Naive thymus-derived CD4-positive, alpha-beta T cell (primary cell): ENCODE measurements at regions of chr11 and their contacts with region 1.

Region 1: DNA sequence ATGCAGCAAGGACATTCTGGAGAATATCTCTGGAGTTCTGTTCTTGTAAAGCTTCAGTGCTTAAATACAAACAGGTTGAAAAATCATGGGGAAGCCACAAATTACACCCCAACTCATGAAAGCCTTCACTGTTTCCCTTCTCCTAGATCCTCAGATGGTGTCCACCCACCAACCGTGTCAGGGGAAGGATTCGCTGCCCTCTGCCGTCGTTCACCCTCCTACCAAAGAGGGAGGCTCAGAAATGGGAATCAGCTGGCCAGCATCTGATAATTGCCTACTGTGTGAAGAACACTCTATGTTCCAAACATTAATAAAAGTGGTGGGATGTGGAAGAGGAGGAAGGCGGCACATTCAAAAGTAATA is 7.4 kb upstream of the HEPACAM start:
- DNase-seq: no peak
- ATAC-seq: no peak
- H3K4me3 ChIP-seq: no peak overlapping the region
- H3K4me3 Mint-ChIP-seq: peak overlapping the region in 3 of 10 donors; percentile 3 to 59 (median 40)
- H3K27ac ChIP-seq: no peak overlapping the region
- H3K27ac Mint-ChIP-seq: peak overlapping the region in 7 of 9 donors; percentile 3 to 95 (median 59)
- H3K4me1 ChIP-seq: peaks cover 6 to 20% of the 10 kb centered on the region in 2 donors
- H3K4me1 Mint-ChIP-seq: peaks cover 4 to 36% (median 30%) of the 10 kb centered on the region in 7 donors
- H3K27me3 ChIP-seq: no peaks in the 10 kb centered on the region
- H3K27me3 Mint-ChIP-seq: no peaks in the 10 kb centered on the region

Region 2: DNA sequence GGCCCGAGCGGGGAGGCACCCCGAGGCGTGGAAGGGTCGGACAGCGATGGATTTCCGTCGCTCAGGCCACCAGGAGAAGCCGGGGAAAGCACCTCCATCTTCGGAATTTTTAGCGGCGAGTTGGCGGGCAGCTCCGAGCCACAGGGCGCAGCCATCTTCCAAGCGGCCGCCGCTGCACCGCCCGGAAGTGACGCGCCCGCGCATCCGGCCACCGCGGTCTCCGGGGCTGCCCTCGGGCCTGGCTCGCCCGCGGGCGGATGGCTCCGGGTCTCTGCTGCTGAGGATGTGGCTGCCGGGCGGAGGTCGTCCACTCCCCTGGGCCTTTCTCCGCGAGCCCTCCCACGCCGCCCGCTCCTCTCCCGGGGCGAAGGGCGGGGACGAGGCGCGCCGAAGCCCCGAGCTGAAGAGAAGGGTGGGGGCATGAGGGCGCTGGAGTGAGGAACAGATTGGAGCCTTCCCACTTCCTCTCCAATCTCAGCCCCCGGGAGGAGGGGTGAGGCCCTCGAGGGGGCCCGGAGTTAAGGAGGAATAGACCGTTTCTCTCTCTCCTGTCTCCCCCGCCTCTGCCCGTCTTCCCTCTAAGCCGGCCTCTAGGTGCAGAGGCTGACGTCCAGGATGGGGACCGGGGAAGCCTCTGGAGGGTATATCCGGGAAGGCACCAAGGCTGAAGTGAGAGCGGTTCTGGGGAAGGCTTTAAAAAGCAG is 142.9 kb before region 1 on chr11 and contains the start of gene MSANTD2:
- CTCF ChIA-PET with region 1: no interaction called
- POLR2A ChIA-PET with region 1: no interaction called
- intact Hi-C with region 1: no loop called
- DNase-seq: peak; percentile 65 to 89 (median 73)
- ATAC-seq: peak; percentile 92
- H3K4me3 ChIP-seq: peak within 1 kb of the TSS; percentile 71
- H3K4me3 Mint-ChIP-seq: peak within 1 kb of the TSS; percentile 88 to 97 (median 96)
- H3K27ac ChIP-seq: peak within 1 kb of the TSS; percentile 93
- H3K27ac Mint-ChIP-seq: peak within 1 kb of the TSS; percentile 88 to 98 (median 94)
- H3K4me1 ChIP-seq: peaks cover 8 to 14% of the 10 kb centered on the region in 2 donors
- H3K4me1 Mint-ChIP-seq: peaks cover 13 to 38% (median 32%) of the 10 kb centered on the region in 7 donors
- H3K27me3 ChIP-seq: no peaks in the 10 kb centered on the region
- H3K27me3 Mint-ChIP-seq: peaks cover 0 to 24% (median 0%) of the 10 kb centered on the region in 5 donors
- total RNA-seq, gene MSANTD2: 9.1 to 29.5 (median 14.4) TPM

Region 3: DNA sequence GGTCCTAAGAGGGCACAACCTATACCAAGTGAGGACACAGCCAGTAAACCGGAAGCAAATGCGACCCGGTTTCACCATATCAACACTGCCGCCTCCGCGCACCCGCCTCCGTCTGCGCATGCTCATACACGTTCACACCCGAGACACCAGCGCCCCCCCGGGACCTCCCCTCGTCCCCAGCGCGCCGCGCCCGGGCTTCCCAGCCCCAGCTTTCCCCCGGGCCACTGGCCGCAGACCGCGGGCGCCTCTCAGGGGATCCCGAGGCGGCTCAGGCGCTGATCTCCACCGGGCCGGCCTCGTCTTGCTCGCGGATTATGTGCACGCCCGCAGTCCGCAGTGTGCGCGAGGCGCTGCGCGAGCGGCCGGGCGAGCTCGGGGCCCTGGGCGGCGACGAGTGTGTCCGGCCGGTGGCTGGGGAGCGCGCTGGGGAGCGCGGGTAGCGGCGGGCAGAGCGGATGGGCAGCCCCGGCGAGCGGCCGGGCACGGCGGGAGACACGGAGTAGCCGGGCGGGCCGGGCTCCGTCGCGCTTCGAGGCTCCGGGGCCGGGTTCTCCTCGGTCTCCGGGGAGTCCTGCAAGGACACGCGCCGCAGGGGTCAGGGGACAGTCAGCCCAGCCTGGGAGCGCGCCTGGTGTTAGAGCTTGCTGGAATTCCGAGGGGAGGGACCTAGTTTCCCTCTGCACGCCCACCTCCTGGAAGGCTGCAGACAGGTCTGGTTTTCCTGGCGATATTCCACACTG is 22.2 kb before region 1 on chr11:
- CTCF ChIA-PET with region 1: interaction called, 3 read pairs
- POLR2A ChIA-PET with region 1: interaction called, 29 read pairs
- intact Hi-C with region 1: no loop called
- DNase-seq: peak; percentile 61 to 86 (median 78)
- ATAC-seq: peak; percentile 81
- H3K4me3 ChIP-seq: peak overlapping the region; percentile 46
- H3K4me3 Mint-ChIP-seq: peak overlapping the region; percentile 65 to 85 (median 80)
- H3K27ac ChIP-seq: peak overlapping the region; percentile 47
- H3K27ac Mint-ChIP-seq: peak overlapping the region in 8 of 9 donors; percentile 32 to 85 (median 62)
- H3K4me1 ChIP-seq: peaks cover 0 to 21% of the 10 kb centered on the region in 2 donors
- H3K4me1 Mint-ChIP-seq: peaks cover 8 to 46% (median 40%) of the 10 kb centered on the region in 7 donors
- H3K27me3 ChIP-seq: no peaks in the 10 kb centered on the region
- H3K27me3 Mint-ChIP-seq: peaks cover 0 to 12% (median 0%) of the 10 kb centered on the region in 5 donors